Naive thymus-derived CD4-positive, alpha-beta T cell (primary cell): ENCODE measurements at regions of chr2 and their contacts with region 1.

Region 1: GRCh38 chr2:40448468-40449079 is 3.3 kb downstream of the SLC8A1 start:
- DNase-seq: no peak
- ATAC-seq: no peak
- H3K4me3 ChIP-seq: no peak overlapping the region
- H3K4me3 Mint-ChIP-seq: no peak overlapping the region
- H3K27ac ChIP-seq: no peak overlapping the region
- H3K27ac Mint-ChIP-seq: no peak overlapping the region
- H3K4me1 ChIP-seq: no peaks in the 10 kb centered on the region
- H3K4me1 Mint-ChIP-seq: peaks cover 6 to 25% (median 18%) of the 10 kb centered on the region in 7 donors
- H3K27me3 ChIP-seq: peaks cover 0 to 3% of the 10 kb centered on the region in 2 donors
- H3K27me3 Mint-ChIP-seq: peaks cover 30 to 48% (median 46%) of the 10 kb centered on the region in 5 donors

Region 2: GRCh38 chr2:38620282-38620977 is 1828.1 kb before region 1 on chr2:
- CTCF ChIA-PET with region 1: no interaction called
- POLR2A ChIA-PET with region 1: no interaction called
- intact Hi-C with region 1: no loop called
- DNase-seq: no peak
- ATAC-seq: no peak
- H3K4me3 ChIP-seq: no peak overlapping the region
- H3K4me3 Mint-ChIP-seq: no peak overlapping the region
- H3K27ac ChIP-seq: no peak overlapping the region
- H3K27ac Mint-ChIP-seq: no peak overlapping the region
- H3K4me1 ChIP-seq: no peaks in the 10 kb centered on the region
- H3K4me1 Mint-ChIP-seq: peaks cover 0 to 25% (median 0%) of the 10 kb centered on the region in 7 donors
- H3K27me3 ChIP-seq: no peaks in the 10 kb centered on the region
- H3K27me3 Mint-ChIP-seq: peaks cover 0 to 5% (median 0%) of the 10 kb centered on the region in 5 donors

Region 3: DNA sequence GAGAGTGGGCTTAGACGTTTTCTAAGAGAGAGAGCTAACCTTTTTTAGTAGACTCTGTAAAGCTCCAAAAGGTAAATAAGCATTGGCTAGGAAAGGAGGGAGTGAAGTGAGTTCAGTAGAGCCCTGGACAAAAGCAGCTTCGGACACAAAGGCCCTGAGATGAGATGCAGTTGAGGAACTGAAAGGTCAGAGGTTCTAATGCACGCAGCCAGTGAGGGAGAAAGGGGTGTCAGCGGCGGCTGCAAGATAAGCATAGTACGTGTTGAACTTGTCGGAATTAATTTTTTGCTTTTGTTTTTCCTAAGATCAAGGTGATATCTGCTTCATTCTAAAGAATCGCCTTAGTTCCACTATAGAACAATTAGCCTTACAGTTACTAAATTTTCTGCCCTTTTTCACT is 14.5 kb after region 1 on chr2:
- CTCF ChIA-PET with region 1: no interaction called
- POLR2A ChIA-PET with region 1: no interaction called
- intact Hi-C with region 1: no loop called
- DNase-seq: no peak
- ATAC-seq: no peak
- H3K4me3 ChIP-seq: no peak overlapping the region
- H3K4me3 Mint-ChIP-seq: no peak overlapping the region
- H3K27ac ChIP-seq: no peak overlapping the region
- H3K27ac Mint-ChIP-seq: no peak overlapping the region
- H3K4me1 ChIP-seq: no peaks in the 10 kb centered on the region
- H3K4me1 Mint-ChIP-seq: no peaks in the 10 kb centered on the region
- H3K27me3 ChIP-seq: no peaks in the 10 kb centered on the region
- H3K27me3 Mint-ChIP-seq: peaks cover 0 to 9% (median 0%) of the 10 kb centered on the region in 5 donors

Region 4: DNA sequence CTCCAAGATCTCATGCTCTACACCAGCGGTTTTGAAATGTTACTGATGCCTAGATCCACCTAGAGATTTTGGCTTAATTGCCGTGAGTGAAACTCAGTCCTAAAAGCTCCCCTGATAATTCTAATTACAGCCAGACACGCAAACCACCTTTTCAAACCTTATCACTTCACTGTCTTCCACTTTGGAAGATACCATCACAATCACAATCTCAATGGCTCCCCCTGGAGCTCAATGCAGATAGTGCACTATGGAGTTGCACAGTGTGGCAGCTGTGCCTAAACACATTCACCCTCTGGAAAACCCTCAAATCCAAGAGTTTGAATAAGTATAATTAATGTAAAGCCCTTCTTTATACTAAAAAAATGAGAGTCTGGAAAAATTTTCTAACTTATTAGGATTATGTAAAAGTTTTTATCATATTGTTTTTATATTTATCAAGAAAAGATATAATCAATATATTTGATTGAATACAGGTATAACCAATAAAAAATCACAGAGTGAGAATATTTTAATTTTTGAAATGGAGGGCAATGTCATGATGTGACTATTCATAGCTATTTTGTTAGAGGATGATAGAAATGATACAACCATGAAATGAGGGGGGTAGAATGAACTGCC is 106.2 kb after region 1 on chr2:
- CTCF ChIA-PET with region 1: no interaction called
- POLR2A ChIA-PET with region 1: no interaction called
- intact Hi-C with region 1: loop called in 1 of 2 experiments (anchors 5 kb)
- DNase-seq: peak in 6 of 9 donors; percentile 5 to 49 (median 12)
- ATAC-seq: peak; percentile 75
- H3K4me3 ChIP-seq: no peak overlapping the region
- H3K4me3 Mint-ChIP-seq: no peak overlapping the region
- H3K27ac ChIP-seq: no peak overlapping the region
- H3K27ac Mint-ChIP-seq: no peak overlapping the region
- H3K4me1 ChIP-seq: no peaks in the 10 kb centered on the region
- H3K4me1 Mint-ChIP-seq: peaks cover 0 to 2% (median 0%) of the 10 kb centered on the region in 7 donors
- H3K27me3 ChIP-seq: no peaks in the 10 kb centered on the region
- H3K27me3 Mint-ChIP-seq: peaks cover 0 to 7% (median 0%) of the 10 kb centered on the region in 5 donors

Region 5: GRCh38 chr2:41698678-41699422 is 1250.3 kb after region 1 on chr2:
- CTCF ChIA-PET with region 1: no interaction called
- POLR2A ChIA-PET with region 1: no interaction called
- intact Hi-C with region 1: loop called in 1 of 2 experiments (anchors 5 kb)
- DNase-seq: peak in 1 of 9 donors; percentile 1
- ATAC-seq: no peak
- H3K4me3 ChIP-seq: no peak overlapping the region
- H3K4me3 Mint-ChIP-seq: peak overlapping the region in 1 of 10 donors; percentile 44
- H3K27ac ChIP-seq: no peak overlapping the region
- H3K27ac Mint-ChIP-seq: no peak overlapping the region
- H3K4me1 ChIP-seq: no peaks in the 10 kb centered on the region
- H3K4me1 Mint-ChIP-seq: peaks cover 0 to 7% (median 0%) of the 10 kb centered on the region in 7 donors
- H3K27me3 ChIP-seq: no peaks in the 10 kb centered on the region
- H3K27me3 Mint-ChIP-seq: peaks cover 4 to 33% (median 28%) of the 10 kb centered on the region in 5 donors